Panc1 (cell line): ENCODE measurements at regions of chr20 and their contacts with region 1.

Region 1: GRCh38 chr20:45607810-45608209 is 21.7 kb upstream of the WFDC10A start:
- DNase-seq: no peak
- ATAC-seq: no peak
- H3K4me3 ChIP-seq: no peak overlapping the region
- H3K27ac ChIP-seq: no peak overlapping the region
- H3K4me1 ChIP-seq: no peaks in the 10 kb centered on the region
- H3K27me3 ChIP-seq: peaks cover 5% of the 10 kb centered on the region
- CTCF ChIP-seq: no peak

Region 2: DNA sequence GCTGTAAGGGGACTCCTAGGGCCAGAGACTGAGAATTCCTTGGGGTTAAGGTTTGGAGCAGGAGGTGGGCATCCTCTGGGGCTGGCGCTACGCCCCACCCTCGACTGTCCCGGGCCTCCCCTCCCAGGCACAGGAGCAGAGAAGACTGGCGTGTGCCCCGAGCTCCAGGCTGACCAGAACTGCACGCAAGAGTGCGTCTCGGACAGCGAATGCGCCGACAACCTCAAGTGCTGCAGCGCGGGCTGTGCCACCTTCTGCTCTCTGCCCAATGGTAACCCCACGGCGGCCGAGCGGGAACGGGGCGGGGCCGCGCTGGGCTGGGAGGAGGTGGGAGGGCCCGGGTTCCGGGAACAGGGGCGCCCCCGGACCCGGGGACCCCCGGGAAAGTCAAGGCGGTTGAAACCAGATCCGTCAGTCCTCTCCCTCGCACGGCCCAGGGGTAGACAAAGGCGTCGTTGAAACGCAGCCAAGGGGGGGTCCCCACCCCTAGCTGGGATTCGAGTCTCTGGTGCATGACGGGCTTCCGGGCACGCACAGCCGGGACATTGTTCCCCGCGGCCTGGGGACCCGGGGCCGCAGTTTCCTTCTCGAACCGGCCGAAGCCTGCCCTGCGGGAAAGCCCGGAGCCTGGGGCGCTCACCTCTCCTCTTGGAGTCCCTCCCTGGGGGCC is 137.4 kb before region 1 on chr20:
- CTCF ChIA-PET with region 1: no interaction called
- POLR2A ChIA-PET with region 1: interaction called, 11 read pairs
- in situ Hi-C with region 1: no loop called
- intact Hi-C with region 1: no loop called
- DNase-seq: no peak
- ATAC-seq: peak; percentile 91
- H3K4me3 ChIP-seq: peak overlapping the region; percentile 42 to 64
- H3K27ac ChIP-seq: no peak overlapping the region
- H3K4me1 ChIP-seq: peaks cover 6% of the 10 kb centered on the region
- H3K27me3 ChIP-seq: peaks cover 14% of the 10 kb centered on the region; the same call in 1 of the 2 replicates
- CTCF ChIP-seq: no peak